Psoas muscle (tissue), 8 donors: ENCODE measurements at regions of chr18 and their contacts with region 1.

Region 1: GRCh38 chr18:46167971-46168370 is 63.8 kb downstream of the HAUS1 start:
- DNase-seq: no peak
- ATAC-seq: no peak
- H3K4me3 ChIP-seq: no peak overlapping the region
- H3K27ac ChIP-seq: no peak overlapping the region
- H3K4me1 ChIP-seq: no peaks in the 10 kb centered on the region
- H3K27me3 ChIP-seq: no peaks in the 10 kb centered on the region
- CTCF ChIP-seq: no peak

Region 2: DNA sequence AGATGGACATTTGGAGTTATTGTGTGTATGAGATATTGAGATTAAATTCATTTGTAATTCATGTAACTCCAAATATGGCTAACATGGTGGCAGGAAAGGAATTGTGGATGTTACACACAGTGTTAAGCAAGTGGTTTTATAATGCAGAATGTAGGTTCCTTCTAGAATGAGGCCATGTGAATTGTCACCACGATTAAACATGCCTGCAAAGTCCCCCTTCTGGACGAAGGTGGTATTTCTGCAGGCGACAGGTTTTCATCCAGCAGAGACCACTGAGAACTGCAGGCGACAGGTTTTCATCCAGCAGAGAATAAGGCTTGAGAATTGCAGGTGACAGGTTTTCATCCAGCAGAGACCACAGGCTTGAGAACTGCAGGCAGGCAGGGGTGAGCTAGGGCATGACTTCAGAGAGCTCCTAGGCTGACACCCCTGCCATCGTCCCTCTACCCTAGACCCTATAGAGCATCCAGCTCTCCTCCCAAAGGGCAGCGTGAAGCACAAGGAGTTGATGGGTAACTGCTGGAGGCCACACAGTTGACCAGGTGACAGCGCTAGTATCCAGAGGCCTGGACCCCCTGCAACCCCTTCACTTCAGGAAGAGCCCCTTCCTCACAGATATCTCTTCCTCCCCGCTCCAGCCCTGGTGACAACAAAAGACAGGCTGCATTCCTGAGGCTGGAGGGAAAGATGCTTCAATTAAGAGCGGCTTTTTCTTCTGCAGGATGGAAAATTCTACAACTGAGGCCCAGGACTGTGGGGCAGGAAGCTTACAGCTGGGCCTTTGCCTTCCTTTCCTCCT is 313.3 kb after region 1 on chr18:
- intact Hi-C with region 1: loop called in 1 of 2 experiments (anchors 10 kb)
- DNase-seq: no peak
- ATAC-seq: peak in 3 of 4 donors; percentile 50 to 60 (median 53)
- H3K4me3 ChIP-seq: no peak overlapping the region
- H3K27ac ChIP-seq: no peak overlapping the region
- H3K4me1 ChIP-seq: no peaks in the 10 kb centered on the region
- H3K27me3 ChIP-seq: no peaks in the 10 kb centered on the region
- CTCF ChIP-seq: peak; percentile 66